GM13976 (cell line): ENCODE measurements at regions of chr11 and their contacts with region 1.

Region 1: DNA sequence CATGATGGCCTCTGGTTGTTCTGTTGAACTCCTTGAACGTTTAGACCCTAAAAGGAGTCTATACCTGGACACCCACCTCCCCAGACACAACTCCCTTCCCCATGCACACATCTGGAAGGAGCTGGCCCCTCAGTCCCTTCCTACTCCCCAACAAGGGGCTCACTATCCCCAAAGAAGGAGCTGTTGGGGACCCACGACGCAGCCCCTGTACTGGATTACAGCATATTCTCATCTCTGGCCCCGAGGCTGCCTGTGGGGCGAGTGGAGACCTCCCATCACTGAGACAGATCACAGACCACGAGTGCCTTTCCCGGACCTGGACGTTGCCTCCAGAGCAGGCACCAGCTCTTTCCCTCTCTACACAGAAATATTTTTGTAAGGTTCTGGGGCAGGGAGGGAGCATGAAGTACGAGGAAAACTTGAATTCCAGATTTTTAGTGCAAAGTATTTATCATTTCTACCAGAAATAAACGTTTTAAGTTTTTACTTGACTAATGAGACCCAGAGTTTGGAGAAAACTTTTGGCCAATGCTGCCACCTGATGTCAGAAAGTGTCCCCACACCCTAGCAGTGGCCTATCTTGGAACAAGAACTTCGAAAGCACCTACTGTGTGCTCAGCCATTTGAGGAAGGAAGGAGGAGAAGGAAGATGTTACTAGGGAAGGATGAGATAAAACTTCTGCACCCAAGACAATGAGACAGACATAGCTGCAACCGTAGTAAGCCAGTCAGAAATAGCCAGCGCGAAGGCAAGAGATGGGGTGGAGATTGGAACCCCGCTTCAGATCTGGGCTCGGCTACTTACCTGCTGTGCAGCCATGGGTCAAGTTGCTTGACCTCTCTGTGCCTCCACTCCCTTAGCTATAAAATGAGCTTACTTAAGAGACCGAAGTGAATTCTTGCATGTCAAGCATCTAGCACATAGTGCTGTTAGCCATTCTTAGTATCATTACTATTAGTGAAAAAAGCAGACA is 10.2 kb upstream of the POU2F3 start:
- DNase-seq: peak; percentile 58
- CTCF ChIP-seq: peak; percentile 55

Region 2: GRCh38 chr11:120172054-120172911 is 57.5 kb before region 1 on chr11:
- in situ Hi-C with region 1: loop called (anchors 5 kb)
- DNase-seq: peak; percentile 83
- CTCF ChIP-seq: peak; percentile 81

Region 3: GRCh38 chr11:120303004-120303637 is 73.4 kb after region 1 on chr11:
- in situ Hi-C with region 1: loop called (anchors 5 kb)
- DNase-seq: peak; percentile 79
- CTCF ChIP-seq: peak; percentile 92